ENCODE measurements at regions of chr7 and their contacts with region 1.

Region 1: GRCh38 chr7:94509879-94510581 is 421 bp downstream of the CASD1 start:
- DNase-seq: peak; percentile 86
- H3K4me3 ChIP-seq: peak overlapping the region; percentile 92
- H3K27ac ChIP-seq: peak overlapping the region; percentile 72
- H3K4me1 ChIP-seq: peaks cover 59% of the 10 kb centered on the region
- CTCF ChIP-seq: 0 out of 2 replicates have a peak, but pooled peaks have one; percentile 28

Region 2: DNA sequence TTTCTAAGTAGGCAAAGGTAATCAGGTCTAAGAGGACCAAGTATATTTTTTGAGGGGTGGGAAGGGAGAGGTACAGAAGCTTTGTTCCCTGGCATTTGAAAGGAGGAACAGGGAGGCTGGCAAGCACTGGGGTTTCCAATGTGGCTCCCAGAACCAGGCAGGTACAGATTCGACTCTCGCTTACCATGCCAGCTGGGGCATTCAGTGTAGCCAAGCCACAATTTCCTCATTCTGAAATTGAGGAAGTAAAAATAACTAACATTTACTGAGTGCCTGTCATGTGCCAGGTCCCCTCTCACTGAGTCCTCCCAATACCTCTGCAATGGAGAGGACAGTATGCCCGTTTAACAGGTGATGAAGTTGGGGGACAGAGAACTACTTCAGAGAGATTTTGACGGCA is 460.0 kb before region 1 on chr7:
- CTCF ChIA-PET with region 1: no interaction called
- POLR2A ChIA-PET with region 1: no interaction called
- intact Hi-C with region 1: loop called (anchors 10 kb)
- DNase-seq: peak; percentile 93
- H3K4me3 ChIP-seq: peak overlapping the region; percentile 48
- H3K27ac ChIP-seq: peak overlapping the region; percentile 97
- H3K4me1 ChIP-seq: peaks cover 83% of the 10 kb centered on the region
- CTCF ChIP-seq: no peak

Region 3: DNA sequence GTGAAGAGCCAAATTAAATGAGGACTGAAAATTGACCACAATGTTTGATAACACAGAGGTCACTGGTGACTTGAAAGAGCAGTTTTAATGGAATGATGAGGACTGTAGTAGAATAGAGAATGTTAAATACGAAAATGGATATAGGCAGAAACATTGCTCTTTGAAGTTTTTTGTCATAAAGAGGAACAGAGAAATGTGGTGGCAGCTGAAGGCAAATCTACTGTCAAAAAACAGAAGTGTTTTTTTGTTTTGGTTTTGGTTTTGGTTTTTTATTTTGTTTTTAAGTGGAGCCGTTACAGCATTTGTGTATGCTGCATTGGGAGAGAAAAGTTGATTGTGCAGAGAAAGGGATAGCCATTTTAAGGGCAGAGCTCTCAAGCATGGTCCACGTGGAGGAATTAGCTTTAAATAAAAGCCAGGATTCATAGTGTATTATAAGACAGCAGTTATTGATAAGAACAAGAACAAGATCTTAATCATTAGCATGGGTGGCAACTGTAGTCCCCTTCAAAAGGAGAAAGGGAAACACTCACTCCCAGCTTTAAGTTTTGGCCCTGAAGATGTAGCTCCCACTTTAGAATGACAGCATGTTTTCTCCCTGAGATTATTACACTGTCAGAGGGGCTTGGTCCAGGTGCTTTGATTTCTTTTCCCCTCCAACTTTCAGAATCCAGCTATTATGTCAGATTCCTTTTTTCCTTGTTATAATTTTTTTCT is 349.2 kb before region 1 on chr7:
- CTCF ChIA-PET with region 1: no interaction called
- POLR2A ChIA-PET with region 1: no interaction called
- intact Hi-C with region 1: loop called (anchors 10 kb)
- DNase-seq: peak; percentile 90
- H3K4me3 ChIP-seq: peak overlapping the region; percentile 53
- H3K27ac ChIP-seq: peak overlapping the region; percentile 91
- H3K4me1 ChIP-seq: peaks cover 38% of the 10 kb centered on the region
- CTCF ChIP-seq: no peak

Region 4: DNA sequence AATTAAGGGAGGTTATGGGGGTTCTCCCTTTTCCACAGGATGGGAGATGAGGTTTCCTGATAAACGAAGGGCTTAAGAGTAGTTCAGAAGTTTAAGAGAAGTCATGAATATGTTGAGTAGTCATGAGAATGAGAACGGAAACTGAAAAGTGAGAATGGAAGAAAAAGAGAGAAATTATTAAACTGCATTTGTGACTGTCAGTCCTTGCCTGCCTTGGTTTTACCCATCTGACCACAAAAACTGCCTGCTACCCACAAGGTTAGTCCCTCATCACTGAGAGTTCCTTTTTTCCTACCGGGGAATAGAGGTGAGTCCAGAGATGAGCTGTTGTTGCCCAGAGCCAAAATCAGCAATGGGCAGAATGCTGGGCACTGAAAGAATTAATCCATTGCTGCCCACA is 331.8 kb before region 1 on chr7:
- CTCF ChIA-PET with region 1: no interaction called
- POLR2A ChIA-PET with region 1: no interaction called
- intact Hi-C with region 1: no loop called
- DNase-seq: no peak
- H3K4me3 ChIP-seq: no peak overlapping the region
- H3K27ac ChIP-seq: no peak overlapping the region
- H3K4me1 ChIP-seq: peaks cover 4% of the 10 kb centered on the region
- CTCF ChIP-seq: no peak

Region 5: GRCh38 chr7:94556028-94556427 is 46.0 kb after region 1 on chr7:
- CTCF ChIA-PET with region 1: no interaction called
- POLR2A ChIA-PET with region 1: interaction called, 3 read pairs
- intact Hi-C with region 1: loop called (anchors 5 kb)
- DNase-seq: peak; percentile 70
- H3K4me3 ChIP-seq: no peak overlapping the region
- H3K27ac ChIP-seq: peak overlapping the region; percentile 52
- H3K4me1 ChIP-seq: peaks cover 19% of the 10 kb centered on the region
- CTCF ChIP-seq: no peak

Region 6: DNA sequence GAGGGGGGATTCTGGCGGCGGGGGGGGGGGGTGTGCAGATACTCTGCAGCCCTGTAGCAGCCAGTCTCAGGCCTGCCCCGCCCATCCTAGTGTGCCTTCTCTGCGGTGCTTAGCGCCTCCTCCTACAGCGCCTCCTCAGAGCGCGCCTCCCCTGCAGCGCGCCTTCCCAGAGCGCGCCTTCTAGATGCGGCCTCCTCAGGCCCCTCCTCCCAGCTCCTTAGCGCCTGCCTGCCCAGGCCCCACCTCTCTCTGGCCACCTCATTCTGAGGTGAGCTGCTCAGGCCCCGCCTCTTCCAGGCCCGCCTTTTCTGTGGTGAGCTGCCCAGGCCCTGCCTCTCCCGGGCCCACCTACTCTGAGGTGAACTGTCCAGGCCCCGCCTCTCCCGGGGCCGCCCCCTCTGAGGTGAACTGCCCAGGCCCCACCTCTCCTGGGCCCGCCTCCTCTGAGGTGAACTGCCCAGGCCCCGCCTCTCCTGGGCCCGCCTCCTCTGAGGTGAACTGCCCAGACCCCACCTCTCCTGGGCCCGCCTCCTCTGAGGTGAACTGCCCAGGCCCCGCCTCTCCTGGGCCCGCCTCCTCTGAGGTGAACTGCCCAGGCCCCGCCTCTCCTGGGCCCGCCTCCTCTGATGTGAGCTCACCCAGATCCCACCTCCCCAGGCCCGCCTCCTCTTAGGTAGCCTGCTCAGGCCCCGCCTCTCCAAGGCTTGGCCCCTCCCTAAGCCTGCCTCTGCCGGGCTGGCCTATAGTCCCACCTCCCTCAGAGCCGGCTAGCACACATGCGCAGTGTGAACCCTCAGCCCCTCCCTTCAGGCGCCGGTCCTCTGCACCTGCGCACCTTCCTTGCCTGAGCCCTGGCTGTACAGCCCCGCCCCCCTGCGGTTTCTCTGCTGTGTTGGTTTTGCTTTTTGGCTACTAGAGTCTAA is 148.0 kb after region 1 on chr7:
- CTCF ChIA-PET with region 1: no interaction called
- POLR2A ChIA-PET with region 1: interaction called, 7 read pairs
- intact Hi-C with region 1: loop called (anchors 1 kb)
- DNase-seq: peak; percentile 94
- H3K4me3 ChIP-seq: peak overlapping the region; percentile 71
- H3K27ac ChIP-seq: peak overlapping the region; percentile 42
- H3K4me1 ChIP-seq: peaks cover 5% of the 10 kb centered on the region
- CTCF ChIP-seq: peak; percentile 29; the same call in 1 of the 2 replicates

Region 7: DNA sequence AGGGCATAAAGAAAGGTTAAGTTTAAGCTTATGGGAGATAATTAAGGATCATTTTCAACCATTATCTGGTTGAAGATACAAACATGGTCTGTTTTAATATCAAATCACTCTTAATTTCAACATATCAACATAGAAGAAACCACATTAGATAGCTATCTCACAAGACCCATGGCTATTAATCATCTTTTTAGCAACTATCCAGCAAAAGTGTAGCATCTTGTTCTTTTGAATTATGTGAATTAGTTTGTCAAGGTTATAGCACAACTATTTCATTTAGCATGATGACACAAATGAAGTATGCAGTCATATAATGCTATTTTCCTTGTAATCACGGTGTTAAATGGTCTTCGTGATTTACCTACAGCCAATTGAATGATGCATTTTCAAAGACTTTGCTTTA is 338.5 kb after region 1 on chr7:
- CTCF ChIA-PET with region 1: no interaction called
- POLR2A ChIA-PET with region 1: no interaction called
- intact Hi-C with region 1: no loop called
- DNase-seq: no peak
- H3K4me3 ChIP-seq: no peak overlapping the region
- H3K27ac ChIP-seq: no peak overlapping the region
- H3K4me1 ChIP-seq: no peaks in the 10 kb centered on the region
- CTCF ChIP-seq: no peak

Measured in OCI-LY7 (cell line).